Gastrocnemius medialis (tissue), 4 donors: ENCODE measurements at regions of chr18 and their contacts with region 1.

Region 1: DNA sequence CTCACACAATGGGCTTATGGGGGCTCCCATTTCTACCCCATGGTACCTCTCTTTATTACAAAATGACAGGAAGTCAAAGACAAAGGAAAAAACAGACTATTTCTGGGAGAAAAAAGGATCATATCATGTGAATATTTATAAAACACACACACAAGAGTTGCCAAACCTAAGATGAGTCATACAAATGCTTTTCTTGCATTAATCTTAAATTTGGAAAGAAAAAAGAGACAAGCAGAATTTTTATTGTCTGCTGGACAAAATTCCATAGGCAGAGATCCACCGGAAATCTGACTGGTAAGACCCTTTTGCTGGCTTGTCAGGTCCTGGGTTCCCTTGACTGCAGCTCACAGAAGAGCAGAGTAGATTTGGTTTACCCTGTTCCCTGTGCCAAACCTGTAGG is 1732.3 kb upstream of the PIK3C3 start:
- DNase-seq: no peak
- ATAC-seq: no peak
- H3K4me3 ChIP-seq: no peak overlapping the region
- H3K27ac ChIP-seq: no peak overlapping the region
- H3K4me1 ChIP-seq: no peaks in the 10 kb centered on the region
- H3K27me3 ChIP-seq: no peaks in the 10 kb centered on the region
- CTCF ChIP-seq: no peak
- POLR2A ChIP-seq: no peak

Region 2: GRCh38 chr18:40124107-40124506 is 98.7 kb before region 1 on chr18:
- in situ Hi-C with region 1: no loop called
- intact Hi-C with region 1: no loop called
- DNase-seq: no peak
- ATAC-seq: no peak
- H3K4me3 ChIP-seq: no peak overlapping the region
- H3K27ac ChIP-seq: no peak overlapping the region
- H3K4me1 ChIP-seq: no peaks in the 10 kb centered on the region
- H3K27me3 ChIP-seq: no peaks in the 10 kb centered on the region
- CTCF ChIP-seq: no peak
- POLR2A ChIP-seq: no peak

Region 3: GRCh38 chr18:40313030-40313642 is 90.4 kb after region 1 on chr18:
- in situ Hi-C with region 1: loop called in 1 of 4 experiments (anchors 25 kb)
- intact Hi-C with region 1: no loop called
- DNase-seq: no peak
- ATAC-seq: no peak
- H3K4me3 ChIP-seq: no peak overlapping the region
- H3K27ac ChIP-seq: no peak overlapping the region
- H3K4me1 ChIP-seq: no peaks in the 10 kb centered on the region
- H3K27me3 ChIP-seq: no peaks in the 10 kb centered on the region
- CTCF ChIP-seq: no peak
- POLR2A ChIP-seq: no peak